Posterior vena cava (tissue), 2 donors: ENCODE measurements at regions of chr2 and their contacts with region 1.

Region 1: DNA sequence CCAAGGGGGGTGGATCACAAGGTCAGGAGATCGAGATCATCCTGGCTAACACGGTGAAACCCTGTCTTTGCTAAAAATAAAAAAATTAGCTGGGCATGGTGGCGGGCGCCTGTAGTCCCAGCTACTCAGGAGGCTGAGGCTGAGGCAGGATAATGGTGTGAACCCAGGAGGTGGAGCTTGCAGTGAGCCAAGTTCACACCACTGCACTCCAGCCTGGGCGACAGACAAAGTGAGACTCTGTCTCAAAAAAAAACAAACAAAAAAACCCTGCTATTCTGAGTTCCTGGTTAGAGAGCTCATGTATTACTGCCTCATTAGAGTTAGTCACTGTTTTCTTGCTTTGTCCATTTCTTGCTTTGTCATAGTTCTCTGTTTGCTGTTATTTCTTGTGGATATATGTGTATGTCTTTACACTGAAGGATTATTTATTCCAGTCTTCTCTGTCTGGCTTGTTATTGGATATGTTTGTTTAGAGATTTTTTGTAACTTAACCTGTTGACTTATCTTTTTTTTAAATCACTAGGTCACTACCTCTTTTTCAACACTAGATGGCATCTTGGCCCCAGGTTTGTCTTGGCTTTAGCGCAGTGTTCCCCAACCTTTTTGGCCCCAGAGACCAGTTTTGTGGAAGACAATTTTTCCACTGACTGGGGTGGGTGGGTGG is 17.0 kb downstream of the TTLL4 start:
- DNase-seq: no peak

Region 2: GRCh38 chr2:217756375-217757107 is 971.1 kb before region 1 on chr2:
- intact Hi-C with region 1: loop called in 1 of 2 experiments (anchors 5 kb)
- DNase-seq: peak; percentile 91

Region 3: GRCh38 chr2:218710687-218711549 is 16.7 kb before region 1 on chr2 and contains the start of gene TTLL4:
- intact Hi-C with region 1: no loop called
- DNase-seq: peak; percentile 100
- total RNA-seq, gene TTLL4: 14.6 to 17.5 TPM